ENCODE measurements at regions of chr1 and their contacts with region 1.

Region 1: GRCh38 chr1:205711104-205712020 is 31.1 kb upstream of the SLC45A3 start:
- DNase-seq: peak; percentile 70
- H3K4me3 ChIP-seq: no peak overlapping the region; a peak in 1 of 4 replicates
- H3K27ac ChIP-seq: peak overlapping the region; percentile 53 to 55
- H3K4me1 ChIP-seq: no peaks in the 10 kb centered on the region; a peak in 1 of 4 replicates
- H3K27me3 ChIP-seq: no peaks in the 10 kb centered on the region
- CTCF ChIP-seq: peak; percentile 96
- EP300 ChIP-seq: no peak
- RAD21 ChIP-seq: peak; percentile 81

Region 2: GRCh38 chr1:205528887-205529825 is 182.2 kb before region 1 on chr1:
- CTCF ChIA-PET with region 1: interaction called, 12 read pairs
- POLR2A ChIA-PET with region 1: no interaction called
- DNase-seq: peak; percentile 97
- H3K4me3 ChIP-seq: peak overlapping the region; percentile 40 to 59
- H3K27ac ChIP-seq: no peak overlapping the region
- H3K4me1 ChIP-seq: peaks cover 0 to 21% of the 10 kb centered on the region in 2 experiments; a peak in 1 of 4 replicates
- H3K27me3 ChIP-seq: no peaks in the 10 kb centered on the region
- CTCF ChIP-seq: peak; percentile 90
- EP300 ChIP-seq: no peak
- RAD21 ChIP-seq: peak; percentile 83

Region 3: DNA sequence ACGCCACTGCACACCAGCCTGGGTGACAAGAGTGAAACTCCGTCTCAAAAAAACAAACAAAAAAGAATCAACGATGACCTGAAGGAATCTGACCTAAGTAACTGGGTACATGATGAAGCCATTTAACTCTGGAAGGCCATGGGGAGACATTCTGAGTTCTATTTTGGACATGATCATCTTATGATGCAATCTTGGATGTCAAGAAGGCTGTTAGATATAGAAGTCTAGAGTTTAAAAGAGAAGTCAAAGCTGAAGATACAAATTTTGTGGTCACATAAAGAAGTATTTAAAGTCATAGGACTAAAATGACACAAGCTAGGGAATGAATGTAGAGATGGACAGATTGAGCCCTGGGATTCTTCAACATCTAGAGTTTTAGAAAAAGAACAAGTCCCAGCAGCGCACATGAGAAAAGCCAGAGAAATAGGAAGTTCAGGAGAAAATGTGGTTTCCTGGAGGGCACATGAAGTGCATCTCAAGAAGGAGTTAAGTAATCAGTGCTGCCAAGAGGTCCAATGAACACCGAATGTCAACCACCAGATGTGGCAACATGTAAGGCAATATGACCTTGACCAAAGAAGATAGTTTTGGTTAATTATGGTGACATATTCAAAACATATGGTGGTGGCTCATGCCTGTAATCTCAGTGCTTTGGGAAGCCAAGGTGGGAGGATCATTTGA is 106.4 kb before region 1 on chr1:
- CTCF ChIA-PET with region 1: no interaction called
- POLR2A ChIA-PET with region 1: no interaction called
- DNase-seq: no peak
- H3K4me3 ChIP-seq: no peak overlapping the region
- H3K27ac ChIP-seq: no peak overlapping the region
- H3K4me1 ChIP-seq: peaks cover 3 to 12% of the 10 kb centered on the region in 2 experiments; a peak in 3 of 4 replicates
- H3K27me3 ChIP-seq: no peaks in the 10 kb centered on the region
- CTCF ChIP-seq: no peak
- EP300 ChIP-seq: no peak
- RAD21 ChIP-seq: no peak

Region 4: DNA sequence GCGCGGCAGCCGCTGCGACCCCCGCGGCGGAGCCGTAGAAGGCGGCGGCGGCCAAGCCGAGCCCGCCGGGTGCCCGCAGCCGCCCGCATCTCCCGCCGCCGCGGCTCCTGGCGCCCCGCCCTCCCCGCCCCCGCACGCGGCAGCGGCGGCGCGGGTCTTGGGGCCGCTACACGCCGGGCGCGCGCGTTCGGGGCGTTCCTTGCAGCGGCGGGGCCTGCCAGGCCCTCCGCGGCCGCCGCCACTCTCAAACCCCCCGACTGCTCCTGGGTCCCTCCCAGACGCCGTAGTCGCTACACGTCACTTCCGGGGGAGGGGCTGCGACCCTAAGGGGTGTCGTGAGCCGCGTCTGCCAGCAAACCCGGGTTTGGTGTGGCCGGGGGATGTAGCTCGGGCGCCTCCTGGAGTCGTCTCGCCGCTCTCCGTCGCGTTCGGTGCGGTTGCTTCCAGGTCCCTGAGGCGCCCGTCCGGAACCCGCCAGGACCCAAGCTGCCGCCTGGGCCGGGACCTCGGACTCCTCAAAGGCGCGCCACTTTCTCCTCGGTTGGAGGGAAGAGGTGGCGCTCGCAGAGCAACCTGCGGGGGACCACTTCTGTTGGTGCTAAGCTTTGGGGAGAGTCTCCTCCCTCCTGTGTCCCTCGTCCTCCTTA is 79.5 kb before region 1 on chr1 and contains the start of gene ELK4:
- CTCF ChIA-PET with region 1: interaction called, 23 read pairs
- POLR2A ChIA-PET with region 1: no interaction called
- DNase-seq: peak; percentile 98
- H3K4me3 ChIP-seq: peak within 1 kb of the TSS; percentile 77 to 83
- H3K27ac ChIP-seq: peak within 1 kb of the TSS; percentile 95
- H3K4me1 ChIP-seq: peaks cover 0 to 9% of the 10 kb centered on the region in 2 experiments; a peak in 2 of 4 replicates
- H3K27me3 ChIP-seq: no peaks in the 10 kb centered on the region
- CTCF ChIP-seq: peak; percentile 73
- EP300 ChIP-seq: peak in 1 of 2 experiments; percentile 36; a peak in 1 of 4 replicates
- RAD21 ChIP-seq: peak; percentile 77
- polyA plus RNA-seq, gene ELK4: 2.6 and 3.8 TPM in 2 replicates

Region 5: GRCh38 chr1:205670611-205671430 is 40.5 kb before region 1 on chr1:
- CTCF ChIA-PET with region 1: interaction called, 367 read pairs
- POLR2A ChIA-PET with region 1: no interaction called
- DNase-seq: peak; percentile 20
- H3K4me3 ChIP-seq: no peak overlapping the region
- H3K27ac ChIP-seq: no peak overlapping the region
- H3K4me1 ChIP-seq: peaks cover 0 to 2% of the 10 kb centered on the region in 2 experiments; a peak in 1 of 4 replicates
- H3K27me3 ChIP-seq: no peaks in the 10 kb centered on the region
- CTCF ChIP-seq: no peak
- EP300 ChIP-seq: no peak
- RAD21 ChIP-seq: no peak

Region 6: GRCh38 chr1:205700865-205701401 is 10.4 kb before region 1 on chr1:
- CTCF ChIA-PET with region 1: interaction called, 71 read pairs
- POLR2A ChIA-PET with region 1: no interaction called
- DNase-seq: no peak
- H3K4me3 ChIP-seq: no peak overlapping the region
- H3K27ac ChIP-seq: no peak overlapping the region
- H3K4me1 ChIP-seq: peaks cover 0 to 5% of the 10 kb centered on the region in 2 experiments; a peak in 1 of 4 replicates
- H3K27me3 ChIP-seq: no peaks in the 10 kb centered on the region
- CTCF ChIP-seq: no peak
- EP300 ChIP-seq: no peak
- RAD21 ChIP-seq: no peak

Region 7: DNA sequence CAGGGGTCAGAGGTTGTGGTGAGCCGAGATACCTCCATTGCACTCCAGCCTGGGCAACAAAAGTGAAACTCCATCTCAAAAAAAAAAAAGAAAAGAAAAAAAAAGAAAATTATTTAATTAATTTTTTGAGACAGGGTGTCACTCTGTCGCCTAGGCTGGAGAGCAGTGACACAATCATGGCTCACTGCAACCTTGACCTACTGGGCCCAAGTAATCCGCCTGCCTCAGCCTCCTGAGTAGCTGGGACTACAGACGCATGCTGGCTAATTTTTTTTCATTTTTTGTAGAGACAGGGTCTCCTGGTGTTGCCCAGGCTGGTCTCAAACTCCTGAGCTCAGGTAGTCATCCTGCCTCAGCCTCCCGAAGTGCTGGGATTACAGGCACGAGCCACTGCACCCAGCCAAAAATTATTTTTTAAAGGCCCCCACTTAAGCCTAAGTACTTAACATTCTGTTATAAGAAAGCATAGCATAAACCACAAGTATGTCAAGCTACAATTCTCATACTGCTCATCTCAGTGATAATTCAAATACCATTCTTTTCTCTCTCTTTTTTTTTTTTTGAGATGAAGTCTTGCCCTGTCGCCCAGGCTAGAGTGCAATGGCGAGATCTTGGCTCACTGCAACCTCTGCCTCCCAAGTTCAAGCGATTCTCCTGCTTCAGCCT is 18.7 kb after region 1 on chr1:
- CTCF ChIA-PET with region 1: interaction called, 92 read pairs
- POLR2A ChIA-PET with region 1: no interaction called
- DNase-seq: no peak
- H3K4me3 ChIP-seq: no peak overlapping the region
- H3K27ac ChIP-seq: no peak overlapping the region
- H3K4me1 ChIP-seq: no peaks in the 10 kb centered on the region
- H3K27me3 ChIP-seq: no peaks in the 10 kb centered on the region
- CTCF ChIP-seq: no peak
- EP300 ChIP-seq: no peak
- RAD21 ChIP-seq: no peak

Region 8: DNA sequence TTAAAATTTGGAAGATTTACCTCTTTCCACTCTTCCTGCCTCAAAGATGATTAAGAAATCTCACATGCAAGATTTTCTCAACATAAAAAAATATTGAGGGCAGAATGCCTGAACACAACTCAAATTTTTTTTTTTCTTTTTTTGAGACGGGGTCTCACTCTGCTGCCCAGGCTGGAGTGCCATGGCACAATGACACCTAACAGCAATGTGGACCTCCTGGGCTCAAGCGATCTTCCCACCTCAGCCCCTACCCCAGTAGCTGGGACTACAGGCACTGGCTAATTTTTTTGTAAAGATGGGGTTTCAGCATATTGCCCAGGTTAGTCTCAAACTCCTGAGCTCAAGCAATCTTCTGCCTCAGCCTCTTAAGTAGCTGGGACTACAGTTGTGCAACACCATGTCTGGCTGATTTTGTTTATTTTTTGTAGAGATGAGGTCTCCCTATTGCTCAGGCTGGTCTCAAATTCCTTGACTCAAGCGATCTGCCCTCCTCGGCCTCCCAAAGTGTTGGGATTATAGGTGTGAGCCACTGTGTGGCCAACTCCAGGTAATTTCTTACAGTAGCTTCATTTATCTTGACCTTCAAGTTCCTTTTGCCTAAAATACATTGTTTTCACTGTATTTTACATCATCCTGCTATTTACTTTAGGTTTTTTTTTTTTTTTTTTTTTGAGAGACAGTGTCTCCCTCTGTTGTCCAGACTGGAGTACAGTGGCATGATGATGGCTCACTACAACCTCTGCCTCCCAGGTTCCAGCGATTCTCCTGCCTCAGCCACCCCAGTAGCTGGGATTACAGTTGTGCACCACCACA is 28.2 kb after region 1 on chr1:
- CTCF ChIA-PET with region 1: interaction called, 11 read pairs
- POLR2A ChIA-PET with region 1: no interaction called
- DNase-seq: no peak
- H3K4me3 ChIP-seq: no peak overlapping the region
- H3K27ac ChIP-seq: 0 out of 4 replicates have a peak overlapping the region, but pooled peaks of 1 of the 2 experiments have one; percentile 8
- H3K4me1 ChIP-seq: no peaks in the 10 kb centered on the region; a peak in 1 of 4 replicates
- H3K27me3 ChIP-seq: no peaks in the 10 kb centered on the region
- CTCF ChIP-seq: peak; percentile 39
- EP300 ChIP-seq: no peak
- RAD21 ChIP-seq: no peak

Measured in SK-N-SH (cell line).